ENCODE measurements at regions of chr7 and their contacts with region 1.

Region 1: GRCh38 chr7:105830391-105831301 is 45.8 kb downstream of the ATXN7L1 start:
- DNase-seq: peak; percentile 98
- ATAC-seq: peak; percentile 89
- H3K4me3 ChIP-seq: no peak overlapping the region
- H3K27ac ChIP-seq: peak overlapping the region; percentile 92
- H3K4me1 ChIP-seq: peaks cover 28% of the 10 kb centered on the region
- H3K27me3 ChIP-seq: no peaks in the 10 kb centered on the region
- CTCF ChIP-seq: no peak
- POLR2A ChIP-seq: no peak
- RAD21 ChIP-seq: no peak

Region 2: DNA sequence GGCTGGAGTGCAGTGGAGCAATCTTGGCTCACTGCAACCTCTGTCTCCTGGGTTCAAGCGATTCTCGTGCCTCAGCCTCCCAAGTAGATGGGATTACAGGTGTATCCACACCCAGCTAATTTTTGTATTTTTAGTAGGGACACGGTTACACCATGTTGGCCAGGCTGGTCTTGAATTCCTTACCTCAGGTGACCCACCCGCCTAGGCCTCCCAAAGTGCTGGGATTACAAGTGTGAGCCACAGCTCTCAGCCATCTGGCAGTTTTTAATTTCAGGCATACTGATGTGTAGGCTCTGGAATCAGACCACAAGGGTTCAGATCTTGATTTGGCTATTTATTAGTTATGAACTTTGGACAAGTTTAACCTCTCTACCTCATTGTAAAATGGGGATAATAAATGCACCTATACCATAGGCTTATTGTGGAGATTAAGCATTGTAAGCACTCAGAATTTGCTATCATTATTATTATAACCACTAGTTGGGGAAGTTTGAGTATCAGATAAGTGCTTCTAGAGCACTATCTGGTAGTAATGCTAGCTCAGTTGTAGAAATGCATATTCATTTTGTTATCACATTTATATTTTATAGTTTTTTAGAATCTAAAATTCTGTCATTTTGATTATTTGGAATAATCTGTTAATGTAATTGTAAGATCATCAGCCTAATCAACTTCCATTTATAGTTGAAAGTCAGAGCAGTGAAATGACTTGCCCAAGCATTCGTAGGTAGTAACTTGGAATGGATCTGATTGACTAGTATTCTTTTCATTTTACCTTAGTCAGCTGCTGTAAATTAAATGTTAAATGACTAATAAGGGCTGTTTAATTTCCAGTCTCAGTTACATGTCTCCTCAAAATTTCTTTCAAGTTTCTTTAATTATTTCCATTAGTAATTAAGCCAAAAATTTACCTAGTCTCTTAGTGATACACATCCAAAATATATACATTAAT is 794.2 kb before region 1 on chr7:
- CTCF ChIA-PET with region 1: no interaction called
- POLR2A ChIA-PET with region 1: no interaction called
- dilution Hi-C with region 1: no loop called
- in situ Hi-C with region 1: no loop called
- intact Hi-C with region 1: no loop called
- DNase-seq: no peak
- ATAC-seq: no peak
- H3K4me3 ChIP-seq: no peak overlapping the region
- H3K27ac ChIP-seq: no peak overlapping the region
- H3K4me1 ChIP-seq: peaks cover 2% of the 10 kb centered on the region
- H3K27me3 ChIP-seq: no peaks in the 10 kb centered on the region
- CTCF ChIP-seq: no peak
- POLR2A ChIP-seq: no peak
- RAD21 ChIP-seq: no peak

Region 3: GRCh38 chr7:105795390-105795729 is 35.3 kb before region 1 on chr7:
- CTCF ChIA-PET with region 1: no interaction called
- POLR2A ChIA-PET with region 1: no interaction called
- dilution Hi-C with region 1: no loop called
- in situ Hi-C with region 1: no loop called
- intact Hi-C with region 1: loop called (anchors 1 kb)
- DNase-seq: peak; percentile 84
- ATAC-seq: peak; percentile 45
- H3K4me3 ChIP-seq: no peak overlapping the region
- H3K27ac ChIP-seq: peak overlapping the region; percentile 61; the same call in 1 of the 2 replicates
- H3K4me1 ChIP-seq: peaks cover 25% of the 10 kb centered on the region
- H3K27me3 ChIP-seq: no peaks in the 10 kb centered on the region
- CTCF ChIP-seq: no peak
- POLR2A ChIP-seq: no peak
- RAD21 ChIP-seq: no peak

Region 4: DNA sequence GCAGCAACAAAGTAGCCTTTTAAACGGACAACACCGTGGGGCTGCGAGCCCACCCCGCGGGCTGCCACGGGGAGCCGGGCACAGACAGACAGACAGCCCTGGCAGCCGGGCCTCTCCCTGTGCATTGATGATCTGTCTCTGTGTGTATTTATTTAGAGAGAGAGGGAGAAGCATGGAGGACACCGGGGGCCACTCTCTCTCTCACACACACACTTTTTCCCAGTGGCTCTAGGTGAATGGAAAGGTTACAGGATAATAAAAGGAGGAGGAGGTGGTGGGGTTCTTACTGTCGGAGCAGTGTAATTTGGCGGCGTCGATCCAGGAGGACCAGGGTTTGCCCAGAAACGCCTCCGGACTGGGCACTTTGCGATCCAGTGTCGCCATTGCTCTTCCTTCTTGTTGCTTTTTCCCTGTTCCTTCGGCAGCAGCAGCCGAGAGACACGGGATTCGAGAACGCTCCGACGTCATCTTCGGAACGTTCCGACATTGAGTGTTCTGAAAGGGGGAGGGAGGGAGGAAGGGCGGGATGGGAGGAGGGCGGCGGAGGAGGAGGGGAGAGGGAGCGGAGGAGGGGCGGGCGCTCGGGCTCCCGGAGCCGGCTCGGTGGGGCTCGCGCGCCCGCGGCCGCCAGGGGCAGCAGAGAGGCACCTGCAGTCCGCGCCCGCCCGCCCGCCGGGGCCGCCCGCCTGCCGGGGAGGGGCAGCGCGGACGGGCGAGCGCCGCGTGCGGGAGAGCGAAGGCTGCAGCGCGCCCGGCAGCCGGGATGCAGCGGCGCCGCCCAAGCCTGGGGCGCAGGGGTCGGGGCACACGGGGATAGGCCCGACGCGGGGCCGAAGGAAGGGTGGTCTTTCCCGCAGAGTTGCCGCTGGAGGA is 45.7 kb after region 1 on chr7 and contains the start of gene ATXN7L1:
- CTCF ChIA-PET with region 1: interaction called, 4 read pairs
- POLR2A ChIA-PET with region 1: no interaction called
- dilution Hi-C with region 1: no loop called
- in situ Hi-C with region 1: no loop called
- intact Hi-C with region 1: loop called (anchors 5 kb)
- DNase-seq: peak; percentile 98
- ATAC-seq: peak; percentile 97
- H3K4me3 ChIP-seq: peak within 1 kb of the TSS; percentile 82
- H3K27ac ChIP-seq: peak within 1 kb of the TSS; percentile 91
- H3K4me1 ChIP-seq: peaks cover 9% of the 10 kb centered on the region; the same call in 1 of the 2 replicates
- H3K27me3 ChIP-seq: no peaks in the 10 kb centered on the region
- CTCF ChIP-seq: peak; percentile 72
- POLR2A ChIP-seq: peak; percentile 87
- RAD21 ChIP-seq: peak; percentile 49
- total RNA-seq, gene ATXN7L1: 4.3 and 4.7 TPM in 2 replicates